Activated CD4-positive, alpha-beta T cell treated with anti-CD3 and anti-CD28 coated beads, Interleukin-2, amount 10 ng/mL, durations not matched to agents 24 days and 14 days (primary cell): ENCODE measurements at regions of chrX and their contacts with region 1.

Region 1: DNA sequence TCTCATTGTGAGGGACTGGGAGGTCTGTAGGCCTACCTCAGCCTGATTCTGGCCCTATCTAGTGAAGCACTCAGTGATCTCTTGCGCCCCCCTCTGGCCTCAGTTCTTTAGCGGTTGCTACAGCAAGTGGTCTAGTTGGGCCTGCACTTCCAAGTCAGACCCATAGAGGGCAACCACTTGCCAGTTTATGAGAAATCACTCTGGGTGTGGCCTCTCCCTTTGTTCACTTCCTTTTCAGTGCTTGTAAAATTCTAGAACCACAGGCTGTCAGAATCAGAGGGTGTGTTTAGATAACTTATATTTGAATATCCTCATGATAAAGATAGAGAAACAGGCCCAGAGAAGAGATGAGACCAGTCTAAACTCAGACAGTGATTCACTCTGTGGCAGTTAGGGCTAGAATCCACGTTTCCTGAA is 60.9 kb upstream of the LAS1L start:
- DNase-seq: peak; percentile 96
- H3K4me3 Mint-ChIP-seq: peak overlapping the region; percentile 69
- H3K27ac Mint-ChIP-seq: peak overlapping the region; percentile 98
- H3K4me1 Mint-ChIP-seq: peaks cover 41% of the 10 kb centered on the region
- H3K27me3 Mint-ChIP-seq: no peaks in the 10 kb centered on the region

Region 2: GRCh38 chrX:65667503-65668376 is 72.3 kb after region 1 on chrX and contains the start of gene MSN:
- intact Hi-C with region 1: loop called (anchors 1 kb)
- DNase-seq: peak; percentile 93
- H3K4me3 Mint-ChIP-seq: peak within 1 kb of the TSS; percentile 97
- H3K27ac Mint-ChIP-seq: peak within 1 kb of the TSS; percentile 97
- H3K4me1 Mint-ChIP-seq: peaks cover 30% of the 10 kb centered on the region
- H3K27me3 Mint-ChIP-seq: no peaks in the 10 kb centered on the region
- total RNA-seq, gene MSN: 480 and 482 TPM in 2 replicates

Region 3: DNA sequence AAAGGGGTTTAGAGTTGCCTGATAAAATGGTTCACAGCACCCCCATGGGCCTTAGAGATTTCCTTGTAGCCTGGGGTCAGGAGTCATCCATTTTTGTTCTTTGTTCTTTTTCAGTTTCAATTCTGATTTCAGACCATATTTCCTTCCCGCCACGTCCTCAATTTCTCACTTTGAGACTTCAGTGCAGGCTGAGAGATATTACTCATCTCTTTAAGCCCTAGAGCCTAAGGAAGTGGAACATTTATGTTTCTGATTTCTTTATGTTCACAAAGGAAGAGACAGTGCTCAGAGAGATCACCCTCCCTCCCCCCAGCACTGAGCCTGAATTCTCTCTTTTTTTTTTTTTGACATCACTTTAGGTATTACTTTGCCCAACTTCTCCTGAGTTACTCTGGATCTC is 128.2 kb after region 1 on chrX:
- intact Hi-C with region 1: loop called (anchors 1 kb)
- DNase-seq: peak; percentile 79
- H3K4me3 Mint-ChIP-seq: peak overlapping the region; percentile 25
- H3K27ac Mint-ChIP-seq: peak overlapping the region; percentile 90
- H3K4me1 Mint-ChIP-seq: peaks cover 67% of the 10 kb centered on the region
- H3K27me3 Mint-ChIP-seq: no peaks in the 10 kb centered on the region

Region 4: DNA sequence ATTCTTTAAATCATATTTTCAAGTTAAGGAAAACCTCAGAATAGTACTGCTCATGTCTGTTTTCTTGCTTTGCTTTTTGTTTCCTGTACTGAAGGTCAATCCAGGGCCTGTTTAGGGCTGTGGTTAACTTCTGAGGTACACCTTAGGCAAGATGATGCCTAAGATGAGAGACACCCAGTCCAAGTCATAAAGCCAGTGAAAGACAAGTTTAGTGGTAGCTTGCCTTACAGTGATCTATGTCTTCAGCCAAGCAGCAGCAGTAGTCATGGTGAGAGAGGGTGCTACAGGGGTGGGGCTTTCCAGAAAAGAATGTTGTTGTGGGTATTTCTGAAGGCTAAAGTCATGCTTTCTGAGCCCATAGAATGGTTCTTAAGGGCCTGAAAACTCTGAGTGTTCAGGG is 270.7 kb after region 1 on chrX:
- intact Hi-C with region 1: loop called (anchors 1 kb)
- DNase-seq: peak; percentile 81
- H3K4me3 Mint-ChIP-seq: peak overlapping the region; percentile 32
- H3K27ac Mint-ChIP-seq: peak overlapping the region; percentile 71
- H3K4me1 Mint-ChIP-seq: peaks cover 21% of the 10 kb centered on the region
- H3K27me3 Mint-ChIP-seq: no peaks in the 10 kb centered on the region

Region 5: DNA sequence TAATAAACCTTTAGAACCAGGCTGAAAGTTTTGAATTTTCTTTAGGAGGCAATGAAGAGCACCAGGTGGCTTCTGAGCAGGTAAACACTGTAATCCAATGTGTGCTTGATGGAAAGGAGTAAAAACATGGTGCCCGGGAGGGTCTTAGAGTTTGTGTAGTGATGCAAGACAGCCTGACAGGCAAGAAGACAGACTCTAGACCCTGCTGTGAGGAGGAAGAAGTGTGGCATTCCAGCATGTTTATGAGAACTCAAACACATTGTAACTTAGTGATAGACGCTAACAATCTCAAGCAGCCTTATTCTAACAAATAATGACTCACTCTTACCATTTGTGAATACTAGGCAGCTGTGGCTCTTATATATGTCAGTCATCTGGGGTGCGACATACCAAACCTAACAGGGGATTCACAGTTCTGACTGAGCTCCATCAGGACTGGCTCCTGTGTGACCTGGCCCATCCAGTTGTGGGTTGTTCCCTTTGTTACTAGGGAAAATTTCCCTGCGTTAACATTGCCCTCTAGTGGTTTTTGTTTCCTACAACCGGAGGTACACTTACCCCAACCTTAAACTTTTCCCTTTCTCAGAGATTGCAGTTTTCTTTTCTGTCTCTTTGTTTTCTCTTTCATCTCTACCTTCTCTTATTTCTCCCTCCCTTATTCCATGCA is 390.6 kb after region 1 on chrX:
- intact Hi-C with region 1: loop called (anchors 5 kb)
- DNase-seq: peak; percentile 83
- H3K4me3 Mint-ChIP-seq: no peak overlapping the region
- H3K27ac Mint-ChIP-seq: peak overlapping the region; percentile 81
- H3K4me1 Mint-ChIP-seq: peaks cover 20% of the 10 kb centered on the region
- H3K27me3 Mint-ChIP-seq: no peaks in the 10 kb centered on the region